Ovary (tissue), 10 donors: ENCODE measurements at regions of chr2 and their contacts with region 1.

Region 1: DNA sequence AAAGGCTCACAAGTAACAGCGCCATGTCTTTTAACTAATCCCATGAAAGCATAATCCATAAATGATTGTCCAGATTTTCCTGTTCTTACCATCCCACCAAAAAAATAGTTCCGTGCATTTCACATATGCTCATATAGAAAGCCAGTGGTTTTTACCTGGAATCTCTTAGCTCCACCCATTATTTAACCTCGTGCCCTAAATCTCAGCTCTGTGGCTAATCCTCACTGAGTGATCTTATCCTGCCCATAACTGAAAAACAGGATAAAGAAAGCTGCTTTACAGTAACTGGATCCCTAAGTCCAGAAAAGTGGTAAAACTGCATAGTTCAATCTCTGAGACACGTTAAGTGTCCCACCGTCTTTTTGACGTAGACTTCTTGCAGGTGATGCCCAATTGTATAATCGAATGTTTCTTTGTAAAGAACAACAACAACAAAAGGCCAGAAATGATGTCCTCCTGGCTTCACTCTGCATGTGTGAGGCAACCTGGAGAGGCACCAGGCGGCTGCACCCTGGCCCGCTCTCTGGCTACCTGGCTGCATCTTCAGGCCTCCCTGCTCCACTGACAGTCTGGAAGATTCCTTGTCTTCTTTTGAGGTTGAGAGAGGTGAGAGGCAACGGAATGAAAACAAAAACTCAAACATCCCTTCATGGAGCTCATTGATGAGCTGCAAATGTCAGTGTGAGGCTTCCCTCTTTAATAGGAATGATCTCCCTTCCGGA is 38.6 kb downstream of the FEZ2 start:
- DNase-seq: no peak
- H3K4me3 ChIP-seq: no peak overlapping the region
- H3K27ac ChIP-seq: no peak overlapping the region
- H3K4me1 ChIP-seq: peaks cover 6% of the 10 kb centered on the region
- H3K27me3 ChIP-seq: no peaks in the 10 kb centered on the region
- CTCF ChIP-seq: no peak
- EP300 ChIP-seq: no peak
- POLR2A ChIP-seq: no peak

Region 2: DNA sequence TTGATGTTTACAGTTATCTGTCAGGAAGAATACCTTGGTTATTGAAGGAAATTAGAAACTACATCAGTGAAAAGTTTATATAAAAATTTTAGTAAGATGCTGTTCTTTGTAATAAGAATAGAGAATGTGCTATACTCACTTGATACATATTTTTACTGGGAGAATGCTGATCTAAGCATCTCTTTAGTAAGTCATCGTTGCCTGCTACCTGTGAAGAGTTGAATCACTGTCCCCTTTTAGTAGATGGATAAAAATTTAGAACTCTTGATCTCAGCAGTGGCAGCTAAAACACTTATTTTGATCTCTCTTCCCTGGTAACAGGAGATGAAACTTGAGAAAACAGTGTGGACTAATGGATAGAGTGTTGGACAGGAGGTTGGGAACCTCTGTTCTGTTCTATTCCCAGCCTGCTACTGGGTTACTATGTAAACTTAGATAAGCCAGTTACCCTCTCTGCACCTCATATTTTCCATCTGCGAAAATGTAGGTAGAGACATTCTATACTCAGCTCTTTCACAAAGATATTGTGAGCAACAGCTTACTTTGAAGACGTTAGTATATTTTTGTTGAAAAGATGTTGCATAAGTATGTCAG is 61.7 kb before region 1 on chr2:
- intact Hi-C with region 1: loop called in 1 of 4 experiments (anchors 2 kb)
- DNase-seq: no peak
- H3K4me3 ChIP-seq: no peak overlapping the region
- H3K27ac ChIP-seq: no peak overlapping the region
- H3K4me1 ChIP-seq: no peaks in the 10 kb centered on the region
- H3K27me3 ChIP-seq: no peaks in the 10 kb centered on the region
- CTCF ChIP-seq: no peak
- EP300 ChIP-seq: no peak
- POLR2A ChIP-seq: no peak